ENCODE measurements at regions of chr15 and their contacts with region 1.

Region 1: DNA sequence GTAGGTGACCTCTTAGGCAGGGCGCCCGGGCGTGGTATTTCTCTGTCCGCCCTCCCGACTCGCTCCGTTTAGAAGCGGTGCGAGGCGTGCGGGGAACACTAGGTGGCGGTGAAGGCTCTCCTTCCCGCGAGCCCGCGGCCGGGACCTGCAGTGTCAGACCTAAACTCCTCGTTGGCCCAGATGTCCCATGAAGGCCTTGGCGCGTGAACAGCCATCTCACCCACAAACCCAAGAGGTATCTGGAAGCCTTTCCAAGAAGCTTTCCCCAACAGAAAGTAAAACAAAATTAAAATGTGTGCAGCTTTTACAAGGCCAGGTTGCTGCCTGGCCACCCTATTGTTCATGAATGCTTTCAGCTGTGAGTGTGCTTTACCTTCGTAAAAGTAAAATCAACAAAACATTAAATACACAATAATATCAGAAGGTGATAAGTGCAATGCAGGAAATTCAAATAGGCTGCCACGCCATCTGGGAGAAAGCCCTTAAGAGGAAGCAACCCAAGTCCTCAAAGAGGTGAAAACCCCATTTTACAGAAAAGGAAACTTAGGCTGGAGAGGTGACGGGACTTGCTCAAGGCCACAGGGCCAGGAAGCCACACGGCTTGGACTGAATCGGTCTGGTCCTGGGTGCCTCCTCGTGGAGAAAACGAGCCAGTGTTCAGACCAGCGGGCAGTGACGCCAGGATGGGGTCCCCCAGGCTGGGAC is 120.3 kb downstream of the ETFA start:
- DNase-seq: peak; percentile 93
- H3K4me3 ChIP-seq: no peak overlapping the region; a peak in 1 of 4 replicates
- H3K27ac ChIP-seq: no peak overlapping the region
- H3K4me1 ChIP-seq: peaks cover 2 to 11% of the 10 kb centered on the region in 2 experiments; a peak in 1 of 4 replicates
- H3K27me3 ChIP-seq: no peaks in the 10 kb centered on the region
- CTCF ChIP-seq: peak; percentile 85
- EP300 ChIP-seq: no peak
- RAD21 ChIP-seq: peak; percentile 93

Region 2: GRCh38 chr15:76115888-76116885 is 74.8 kb before region 1 on chr15:
- CTCF ChIA-PET with region 1: no interaction called
- POLR2A ChIA-PET with region 1: no interaction called
- DNase-seq: no peak
- H3K4me3 ChIP-seq: no peak overlapping the region
- H3K27ac ChIP-seq: no peak overlapping the region
- H3K4me1 ChIP-seq: no peaks in the 10 kb centered on the region
- H3K27me3 ChIP-seq: no peaks in the 10 kb centered on the region
- CTCF ChIP-seq: no peak
- EP300 ChIP-seq: no peak
- RAD21 ChIP-seq: no peak

Region 3: DNA sequence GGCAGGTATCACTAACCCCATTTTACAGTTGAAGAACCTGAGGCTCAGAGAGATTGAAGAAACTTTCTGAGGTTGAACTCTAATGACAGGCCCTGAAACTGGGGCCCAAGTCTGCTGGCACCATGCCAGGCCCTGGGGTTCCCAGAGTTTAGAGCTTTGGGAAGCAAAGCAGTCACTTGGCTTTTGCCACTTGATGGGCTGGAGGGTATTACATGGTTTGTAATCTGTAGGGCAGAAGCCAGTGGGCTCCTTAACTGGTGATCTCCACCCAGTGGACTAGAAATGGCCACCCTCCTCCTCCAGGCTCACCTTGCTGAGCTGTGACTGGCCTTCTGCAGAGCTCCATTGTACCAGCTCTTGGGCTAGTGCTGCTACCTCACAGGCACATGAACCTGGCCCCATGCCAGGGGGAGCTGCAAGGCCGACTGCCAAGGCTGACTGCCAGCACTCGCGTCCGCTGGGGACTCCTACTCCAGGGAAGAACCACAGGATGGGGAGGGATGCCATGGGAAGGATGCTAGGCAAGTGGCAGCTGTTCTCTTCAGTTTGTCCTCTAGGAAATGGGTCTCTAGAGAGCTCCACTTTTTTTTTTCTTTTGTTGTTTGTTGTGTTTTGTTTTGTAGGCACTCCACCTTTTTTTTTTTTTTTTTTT is 15.5 kb after region 1 on chr15:
- CTCF ChIA-PET with region 1: interaction called, 22 read pairs
- POLR2A ChIA-PET with region 1: interaction called, 6 read pairs
- DNase-seq: peak; percentile 88
- H3K4me3 ChIP-seq: no peak overlapping the region
- H3K27ac ChIP-seq: peak overlapping the region in 1 of 2 experiments; percentile 47; a peak in 1 of 4 replicates
- H3K4me1 ChIP-seq: peaks cover 0 to 8% of the 10 kb centered on the region in 2 experiments; a peak in 1 of 4 replicates
- H3K27me3 ChIP-seq: no peaks in the 10 kb centered on the region
- CTCF ChIP-seq: no peak
- EP300 ChIP-seq: 0 out of 4 replicates have a peak, but pooled peaks of 1 of the 2 experiments have one; percentile 18
- RAD21 ChIP-seq: 0 out of 2 replicates have a peak, but pooled peaks have one; percentile 5

Region 4: GRCh38 chr15:76235186-76235826 is 44.3 kb after region 1 on chr15:
- CTCF ChIA-PET with region 1: interaction called, 17 read pairs
- POLR2A ChIA-PET with region 1: no interaction called
- DNase-seq: peak; percentile 38
- H3K4me3 ChIP-seq: no peak overlapping the region
- H3K27ac ChIP-seq: no peak overlapping the region
- H3K4me1 ChIP-seq: peaks cover 0 to 2% of the 10 kb centered on the region in 2 experiments; a peak in 3 of 4 replicates
- H3K27me3 ChIP-seq: no peaks in the 10 kb centered on the region
- CTCF ChIP-seq: peak; percentile 65
- EP300 ChIP-seq: no peak
- RAD21 ChIP-seq: peak; percentile 71

Region 5: GRCh38 chr15:76336254-76337058 is 145.5 kb after region 1 on chr15 and contains the start of gene ISL2:
- CTCF ChIA-PET with region 1: interaction called, 29 read pairs
- POLR2A ChIA-PET with region 1: interaction called, 3 read pairs
- DNase-seq: peak; percentile 99
- H3K4me3 ChIP-seq: peak within 1 kb of the TSS; percentile 54 to 74
- H3K27ac ChIP-seq: peak within 1 kb of the TSS; percentile 95 to 99
- H3K4me1 ChIP-seq: peaks cover 4 to 26% of the 10 kb centered on the region in 2 experiments; a peak in 2 of 4 replicates
- H3K27me3 ChIP-seq: no peaks in the 10 kb centered on the region
- CTCF ChIP-seq: no peak
- EP300 ChIP-seq: no peak; a peak in 1 of 4 replicates
- RAD21 ChIP-seq: no peak
- polyA plus RNA-seq, gene ISL2: 3.5 and 6.0 TPM in 2 replicates

Measured in SK-N-SH (cell line).